SK-N-SH (cell line): ENCODE measurements at regions of chr5 and their contacts with region 1.

Region 1: DNA sequence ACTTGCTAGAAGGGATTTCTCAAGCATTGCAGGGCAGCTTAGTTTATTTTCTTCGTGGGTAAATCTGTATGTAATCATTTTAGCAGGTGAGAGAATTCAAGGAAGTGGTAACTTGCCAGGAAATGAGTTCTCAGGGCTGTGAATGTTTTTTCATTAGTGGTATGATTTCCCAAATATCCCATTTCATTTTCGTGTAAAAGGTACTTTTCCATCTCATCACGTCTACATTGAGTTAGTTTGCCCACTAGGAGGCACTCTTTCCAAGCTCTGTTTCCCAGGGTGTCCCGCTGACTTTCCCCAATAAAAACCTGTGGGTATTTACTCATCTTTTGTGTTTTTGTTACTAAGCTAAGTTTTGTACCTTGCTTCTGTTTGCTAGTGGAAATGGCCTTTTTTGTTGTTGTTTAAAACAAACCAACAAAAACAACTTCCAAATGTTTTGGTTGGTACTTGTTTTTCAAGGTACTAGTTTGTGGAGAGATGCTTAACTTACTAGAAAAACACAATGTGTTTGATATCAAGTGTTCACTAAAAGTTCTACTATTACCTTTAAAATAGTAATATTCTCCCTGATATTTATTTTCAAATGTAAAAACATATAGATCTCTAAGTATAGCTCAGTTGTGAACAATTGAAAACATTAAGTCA is 373.6 kb downstream of the ADGRV1 start:
- DNase-seq: peak; percentile 77
- H3K4me3 ChIP-seq: no peak overlapping the region; a peak in 1 of 4 replicates
- H3K27ac ChIP-seq: no peak overlapping the region
- H3K4me1 ChIP-seq: no peaks in the 10 kb centered on the region; a peak in 2 of 4 replicates
- H3K27me3 ChIP-seq: no peaks in the 10 kb centered on the region
- CTCF ChIP-seq: peak; percentile 85
- EP300 ChIP-seq: 0 out of 4 replicates have a peak, but pooled peaks of 1 of the 2 experiments have one; percentile 30
- RAD21 ChIP-seq: peak; percentile 96

Region 2: GRCh38 chr5:90866333-90866732 is 65.8 kb before region 1 on chr5:
- CTCF ChIA-PET with region 1: interaction called, 29 read pairs
- POLR2A ChIA-PET with region 1: no interaction called
- DNase-seq: peak; percentile 48
- H3K4me3 ChIP-seq: no peak overlapping the region; a peak in 1 of 4 replicates
- H3K27ac ChIP-seq: no peak overlapping the region; a peak in 1 of 4 replicates
- H3K4me1 ChIP-seq: peaks cover 0 to 6% of the 10 kb centered on the region in 2 experiments; a peak in 2 of 4 replicates
- H3K27me3 ChIP-seq: no peaks in the 10 kb centered on the region
- CTCF ChIP-seq: peak; percentile 59
- EP300 ChIP-seq: no peak
- RAD21 ChIP-seq: peak; percentile 82

Region 3: GRCh38 chr5:90878549-90879196 is 53.5 kb before region 1 on chr5:
- CTCF ChIA-PET with region 1: no interaction called
- POLR2A ChIA-PET with region 1: no interaction called
- DNase-seq: no peak
- H3K4me3 ChIP-seq: no peak overlapping the region
- H3K27ac ChIP-seq: no peak overlapping the region
- H3K4me1 ChIP-seq: no peaks in the 10 kb centered on the region
- H3K27me3 ChIP-seq: 0 out of 2 replicates have a peak, but pooled peaks cover 5% of the 10 kb centered on the region
- CTCF ChIP-seq: no peak
- EP300 ChIP-seq: no peak
- RAD21 ChIP-seq: no peak

Region 4: DNA sequence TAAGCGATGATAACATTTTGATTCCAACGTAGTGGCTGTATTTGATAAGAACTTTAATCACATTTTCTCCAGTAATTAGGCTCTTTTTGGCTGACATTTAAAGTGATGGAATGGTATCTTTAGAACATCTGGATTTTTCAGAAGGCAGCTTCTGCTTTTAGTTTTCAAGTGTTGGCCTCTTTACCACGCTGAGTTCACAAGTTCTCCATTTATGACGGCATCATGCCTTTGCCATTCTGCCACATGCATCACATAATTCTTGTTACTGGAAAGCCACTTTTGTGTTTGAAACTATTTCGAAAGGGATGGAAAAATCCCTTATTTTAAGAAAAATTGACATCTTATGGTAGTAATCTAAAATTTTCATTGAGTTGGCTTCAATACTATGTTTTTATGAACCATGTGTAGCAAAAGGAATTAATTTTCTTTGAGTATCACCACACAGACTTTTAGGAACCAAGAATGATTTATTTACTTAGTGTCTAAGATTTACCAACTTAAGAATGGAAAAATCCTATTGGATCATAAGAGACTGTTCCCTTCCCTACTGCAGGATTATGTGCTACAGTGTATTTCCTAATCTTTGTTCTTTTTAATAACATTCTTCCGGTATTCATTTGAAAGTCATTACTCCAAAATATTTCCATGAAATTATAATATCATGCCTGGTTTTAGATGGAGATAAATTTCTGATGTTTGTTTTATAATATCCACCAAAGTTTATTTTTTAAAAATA is 29.4 kb before region 1 on chr5:
- CTCF ChIA-PET with region 1: no interaction called
- POLR2A ChIA-PET with region 1: no interaction called
- DNase-seq: no peak
- H3K4me3 ChIP-seq: no peak overlapping the region
- H3K27ac ChIP-seq: no peak overlapping the region
- H3K4me1 ChIP-seq: no peaks in the 10 kb centered on the region
- H3K27me3 ChIP-seq: no peaks in the 10 kb centered on the region
- CTCF ChIP-seq: no peak
- EP300 ChIP-seq: no peak
- RAD21 ChIP-seq: no peak

Region 5: DNA sequence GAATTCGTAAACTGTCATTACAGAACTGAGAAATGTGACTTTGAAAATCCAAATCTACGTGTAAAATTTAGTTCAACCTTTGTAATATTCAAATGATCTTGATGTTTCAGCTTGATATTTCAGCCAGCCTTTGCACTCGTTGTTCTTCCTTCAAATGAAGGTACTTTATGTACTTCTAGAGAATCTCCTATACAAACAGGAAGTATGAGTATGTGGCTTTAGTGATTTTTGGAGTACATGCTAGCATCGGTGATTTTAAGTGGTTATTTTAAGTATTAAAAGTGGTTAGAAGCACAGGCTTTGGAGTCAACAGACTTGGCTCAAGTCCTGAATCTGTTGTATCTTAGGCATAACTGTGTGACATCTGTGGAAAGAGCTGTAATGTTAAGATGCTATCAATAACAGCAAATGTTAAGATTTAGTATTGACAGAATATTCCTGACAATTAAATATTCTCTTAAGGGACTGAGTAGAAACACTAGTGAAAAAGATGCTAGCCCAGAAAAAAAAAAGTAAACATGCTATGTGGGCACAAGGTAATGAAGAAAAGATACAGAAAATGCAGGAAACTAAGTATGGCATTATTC is 24.4 kb after region 1 on chr5:
- CTCF ChIA-PET with region 1: interaction called, 13 read pairs
- POLR2A ChIA-PET with region 1: no interaction called
- DNase-seq: no peak
- H3K4me3 ChIP-seq: no peak overlapping the region
- H3K27ac ChIP-seq: peak overlapping the region in 1 of 2 experiments; percentile 93; a peak in 2 of 4 replicates
- H3K4me1 ChIP-seq: peaks cover 0 to 5% of the 10 kb centered on the region in 2 experiments; a peak in 2 of 4 replicates
- H3K27me3 ChIP-seq: no peaks in the 10 kb centered on the region
- CTCF ChIP-seq: no peak
- EP300 ChIP-seq: no peak
- RAD21 ChIP-seq: no peak

Region 6: GRCh38 chr5:90968319-90968718 is 36.1 kb after region 1 on chr5:
- CTCF ChIA-PET with region 1: interaction called, 13 read pairs
- POLR2A ChIA-PET with region 1: no interaction called
- DNase-seq: peak; percentile 36
- H3K4me3 ChIP-seq: no peak overlapping the region
- H3K27ac ChIP-seq: peak overlapping the region in 1 of 2 experiments; percentile 99; a peak in 2 of 4 replicates
- H3K4me1 ChIP-seq: peaks cover 0 to 11% of the 10 kb centered on the region in 2 experiments; a peak in 2 of 4 replicates
- H3K27me3 ChIP-seq: no peaks in the 10 kb centered on the region
- CTCF ChIP-seq: no peak
- EP300 ChIP-seq: peak in 1 of 2 experiments; percentile 51; a peak in 1 of 4 replicates
- RAD21 ChIP-seq: no peak

Region 7: DNA sequence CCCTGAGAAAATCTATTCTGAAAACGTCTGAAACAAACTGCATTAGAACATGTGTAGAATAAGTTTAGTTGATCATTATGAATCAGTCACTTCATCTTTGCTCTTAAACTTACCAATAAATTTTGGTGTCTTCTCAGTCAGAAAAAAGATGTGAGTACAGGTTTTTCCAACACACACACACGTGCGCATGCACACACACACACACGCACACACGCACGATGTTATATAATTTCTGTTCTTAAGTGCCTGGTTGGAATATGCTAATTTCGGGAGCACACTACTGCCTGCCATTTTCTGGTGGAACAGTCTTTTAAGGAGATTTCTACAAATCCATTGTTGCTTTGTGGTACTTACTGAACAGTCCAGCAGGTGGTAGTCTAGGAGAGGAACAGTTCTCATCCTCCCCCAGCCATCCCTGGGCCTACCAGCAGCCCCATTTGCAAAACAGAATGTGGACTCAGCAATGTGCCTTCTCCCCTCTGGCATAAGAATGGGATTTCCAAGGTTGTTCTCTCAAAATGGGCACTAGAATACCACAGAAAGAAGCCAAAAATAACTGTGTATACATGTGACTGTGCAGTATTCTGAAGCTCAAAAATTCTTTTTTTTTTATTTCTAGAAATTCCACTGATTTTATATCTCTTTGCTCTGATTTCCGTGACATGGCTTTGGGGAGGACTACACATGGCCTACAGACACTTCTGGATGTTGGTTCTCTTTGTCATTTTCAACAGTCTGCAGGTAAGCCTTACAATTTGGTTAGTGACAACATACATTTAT is 169.6 kb after region 1 on chr5:
- CTCF ChIA-PET with region 1: interaction called, 13 read pairs
- POLR2A ChIA-PET with region 1: no interaction called
- DNase-seq: peak; percentile 71
- H3K4me3 ChIP-seq: no peak overlapping the region
- H3K27ac ChIP-seq: peak overlapping the region; percentile 11 to 39; a peak in 2 of 4 replicates
- H3K4me1 ChIP-seq: peaks cover 0 to 2% of the 10 kb centered on the region in 2 experiments; a peak in 1 of 4 replicates
- H3K27me3 ChIP-seq: no peaks in the 10 kb centered on the region
- CTCF ChIP-seq: peak; percentile 82
- EP300 ChIP-seq: peak in 1 of 2 experiments; percentile 16; a peak in 1 of 4 replicates
- RAD21 ChIP-seq: peak; percentile 96

Region 8: DNA sequence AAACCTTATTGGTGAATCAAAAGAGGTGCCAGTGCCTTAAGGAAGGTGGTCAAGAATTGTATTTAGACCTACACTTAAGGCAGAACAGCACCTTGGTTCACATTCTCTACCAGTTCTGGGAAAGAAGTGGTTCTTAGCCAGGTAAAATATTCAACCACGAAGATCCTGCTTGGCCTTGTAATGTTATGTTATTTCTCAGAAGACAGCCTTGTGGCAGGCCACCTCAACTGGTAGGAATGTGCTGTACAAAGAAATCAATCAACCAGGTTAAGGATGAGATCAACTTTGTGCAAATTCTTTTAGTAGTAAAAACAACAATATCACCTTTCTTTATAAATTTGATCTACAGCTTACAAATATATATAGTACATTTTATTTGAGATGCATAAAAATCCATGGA is 204.1 kb after region 1 on chr5:
- CTCF ChIA-PET with region 1: no interaction called
- POLR2A ChIA-PET with region 1: no interaction called
- DNase-seq: no peak
- H3K4me3 ChIP-seq: no peak overlapping the region
- H3K27ac ChIP-seq: 0 out of 4 replicates have a peak overlapping the region, but pooled peaks of 1 of the 2 experiments have one; percentile 34
- H3K4me1 ChIP-seq: no peaks in the 10 kb centered on the region; a peak in 2 of 4 replicates
- H3K27me3 ChIP-seq: no peaks in the 10 kb centered on the region
- CTCF ChIP-seq: no peak
- EP300 ChIP-seq: no peak
- RAD21 ChIP-seq: no peak